CD8-positive, alpha-beta memory T cell (primary cell): ENCODE measurements at regions of chr12 and their contacts with region 1.

Region 1: DNA sequence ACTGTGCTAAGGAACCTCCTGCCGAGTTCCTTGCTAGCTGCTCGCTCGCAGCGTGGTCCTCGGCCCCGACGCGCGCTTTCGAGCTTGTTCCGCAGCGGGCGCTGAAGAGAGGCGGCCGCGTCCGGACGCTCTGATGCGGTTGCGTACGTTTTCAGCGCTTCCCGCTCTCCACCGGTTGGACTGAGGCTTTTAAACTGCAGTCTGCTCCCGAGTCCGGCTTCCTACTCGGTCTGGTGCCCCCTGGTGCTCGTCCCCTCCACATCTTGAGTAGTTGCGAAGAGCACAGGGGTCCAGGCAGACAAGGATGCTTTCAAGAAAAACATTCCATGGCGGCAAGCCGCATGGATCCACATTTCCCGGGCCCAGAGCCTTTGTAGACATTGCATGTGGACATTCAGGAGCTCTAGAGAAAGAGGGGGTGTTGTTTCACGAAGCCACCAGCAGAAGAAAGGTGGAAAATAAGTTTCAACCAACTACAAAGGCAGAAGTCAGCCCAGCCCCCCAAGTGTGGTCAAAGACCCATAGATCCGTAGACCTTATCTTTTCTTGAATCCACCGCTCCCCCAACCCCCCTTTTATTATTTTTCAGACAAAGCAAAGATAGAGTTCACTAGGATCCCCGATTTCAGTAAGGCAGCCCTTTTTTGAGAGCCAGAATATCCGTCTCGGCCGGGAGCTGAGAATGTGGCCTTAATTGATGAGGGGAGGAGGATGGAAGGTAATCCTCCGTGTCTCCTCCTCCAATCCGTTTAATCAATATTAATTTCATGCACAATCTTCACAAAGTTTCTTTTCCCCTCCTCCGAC is 984 bp upstream of the WNK1 start:
- DNase-seq: peak; percentile 70 to 86 (median 81)
- H3K4me3 ChIP-seq: peak overlapping the region; percentile 56
- H3K4me3 Mint-ChIP-seq: no peak overlapping the region
- H3K27ac ChIP-seq: peak overlapping the region; percentile 71
- H3K27ac Mint-ChIP-seq: no peak overlapping the region
- H3K4me1 ChIP-seq: peaks cover 24% of the 10 kb centered on the region
- H3K4me1 Mint-ChIP-seq: peaks cover 12 to 24% (median 21%) of the 10 kb centered on the region in 3 donors
- H3K27me3 ChIP-seq: no peaks in the 10 kb centered on the region
- H3K27me3 Mint-ChIP-seq: no peaks in the 10 kb centered on the region

Region 2: DNA sequence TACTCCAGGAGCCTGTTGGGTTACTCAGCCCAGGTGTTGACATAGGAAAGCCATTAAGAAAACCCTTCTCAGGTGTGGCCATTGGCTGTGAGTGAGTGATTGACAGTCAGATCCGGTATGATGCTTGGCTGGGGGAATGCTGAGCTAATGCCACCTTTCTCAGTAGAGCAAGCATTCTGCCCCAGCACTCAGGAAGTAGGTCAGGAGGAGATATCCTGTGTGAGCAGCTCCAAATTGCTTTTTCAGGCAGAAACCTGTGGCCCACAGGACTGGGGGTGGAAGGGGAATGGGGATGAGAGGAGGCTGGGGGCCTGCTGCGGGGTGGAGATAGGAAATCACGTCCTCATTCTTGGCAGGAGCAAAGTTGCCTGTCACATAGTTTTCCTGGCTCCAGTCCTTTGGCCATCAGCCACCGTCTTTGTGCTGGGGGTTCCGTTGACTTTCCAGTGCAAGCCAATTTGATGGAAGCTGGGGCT is 143.8 kb before region 1 on chr12:
- CTCF ChIA-PET with region 1: interaction called, 13 read pairs
- POLR2A ChIA-PET with region 1: interaction called, 3 read pairs
- DNase-seq: no peak
- H3K4me3 ChIP-seq: no peak overlapping the region
- H3K4me3 Mint-ChIP-seq: no peak overlapping the region
- H3K27ac ChIP-seq: no peak overlapping the region
- H3K27ac Mint-ChIP-seq: peak overlapping the region in 2 of 8 donors; percentile 27 to 59
- H3K4me1 ChIP-seq: peaks cover 16% of the 10 kb centered on the region
- H3K4me1 Mint-ChIP-seq: peaks cover 25 to 37% (median 25%) of the 10 kb centered on the region in 3 donors
- H3K27me3 ChIP-seq: no peaks in the 10 kb centered on the region
- H3K27me3 Mint-ChIP-seq: no peaks in the 10 kb centered on the region

Region 3: DNA sequence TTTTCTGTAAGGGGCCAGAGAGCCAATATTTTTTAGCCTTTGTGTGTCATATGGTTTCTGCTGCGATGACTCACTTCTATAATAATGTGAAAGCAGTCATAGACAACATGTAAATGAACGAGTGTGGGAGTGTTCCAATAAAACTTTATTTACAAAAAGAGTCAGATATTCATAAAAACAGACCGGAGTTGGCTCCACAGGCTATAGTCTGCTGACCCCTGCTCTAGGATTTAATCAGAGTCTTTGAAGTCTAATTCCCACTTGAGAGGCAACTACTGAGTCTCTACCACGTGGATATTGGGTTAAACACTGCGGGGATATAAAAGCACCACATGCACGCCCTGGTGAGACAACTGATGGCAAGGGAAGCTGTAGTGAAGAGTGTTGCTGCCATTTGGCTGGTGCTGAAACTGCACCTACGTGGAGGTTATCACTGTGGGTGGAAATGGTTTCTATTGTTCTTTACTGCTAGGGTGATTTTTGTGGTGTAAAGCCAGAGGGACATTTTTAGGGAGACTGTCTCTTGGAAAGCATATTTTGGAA is 84.6 kb before region 1 on chr12:
- CTCF ChIA-PET with region 1: interaction called, 27 read pairs
- POLR2A ChIA-PET with region 1: interaction called, 23 read pairs
- DNase-seq: peak in 2 of 5 donors; percentile 56 to 58
- H3K4me3 ChIP-seq: no peak overlapping the region
- H3K4me3 Mint-ChIP-seq: peak overlapping the region; percentile 4 to 76 (median 63)
- H3K27ac ChIP-seq: peak overlapping the region; percentile 62
- H3K27ac Mint-ChIP-seq: peak overlapping the region; percentile 69 to 94 (median 90)
- H3K4me1 ChIP-seq: peaks cover 46% of the 10 kb centered on the region
- H3K4me1 Mint-ChIP-seq: peaks cover 52 to 67% (median 66%) of the 10 kb centered on the region in 3 donors
- H3K27me3 ChIP-seq: no peaks in the 10 kb centered on the region
- H3K27me3 Mint-ChIP-seq: no peaks in the 10 kb centered on the region

Region 4: DNA sequence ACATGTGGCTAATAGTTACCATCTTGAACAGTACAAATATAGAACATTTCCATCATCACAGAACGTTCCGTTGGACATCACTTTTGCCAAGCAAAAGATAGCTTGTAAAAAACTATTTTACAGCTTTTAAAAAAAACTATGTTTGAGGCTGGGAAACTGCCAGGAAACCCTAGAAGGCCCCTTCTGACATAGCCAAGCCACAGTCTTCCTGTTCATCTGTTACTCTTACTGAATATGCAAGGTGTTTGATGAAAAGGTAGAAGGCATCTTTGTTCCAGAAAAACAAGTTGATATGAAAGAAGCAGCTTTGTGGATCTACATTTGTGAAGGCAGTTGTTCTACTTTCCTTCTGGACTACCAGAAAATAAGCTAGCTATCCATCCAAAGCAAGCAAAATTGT is 22.6 kb before region 1 on chr12:
- CTCF ChIA-PET with region 1: interaction called, 24 read pairs
- POLR2A ChIA-PET with region 1: interaction called, 9 read pairs
- DNase-seq: peak in 2 of 5 donors; percentile 47 to 75
- H3K4me3 ChIP-seq: no peak overlapping the region
- H3K4me3 Mint-ChIP-seq: peak overlapping the region in 4 of 7 donors; percentile 6 to 74 (median 46)
- H3K27ac ChIP-seq: no peak overlapping the region
- H3K27ac Mint-ChIP-seq: peak overlapping the region in 7 of 8 donors; percentile 60 to 94 (median 84)
- H3K4me1 ChIP-seq: peaks cover 61% of the 10 kb centered on the region
- H3K4me1 Mint-ChIP-seq: peaks cover 39 to 67% (median 65%) of the 10 kb centered on the region in 3 donors
- H3K27me3 ChIP-seq: no peaks in the 10 kb centered on the region
- H3K27me3 Mint-ChIP-seq: no peaks in the 10 kb centered on the region

Region 5: DNA sequence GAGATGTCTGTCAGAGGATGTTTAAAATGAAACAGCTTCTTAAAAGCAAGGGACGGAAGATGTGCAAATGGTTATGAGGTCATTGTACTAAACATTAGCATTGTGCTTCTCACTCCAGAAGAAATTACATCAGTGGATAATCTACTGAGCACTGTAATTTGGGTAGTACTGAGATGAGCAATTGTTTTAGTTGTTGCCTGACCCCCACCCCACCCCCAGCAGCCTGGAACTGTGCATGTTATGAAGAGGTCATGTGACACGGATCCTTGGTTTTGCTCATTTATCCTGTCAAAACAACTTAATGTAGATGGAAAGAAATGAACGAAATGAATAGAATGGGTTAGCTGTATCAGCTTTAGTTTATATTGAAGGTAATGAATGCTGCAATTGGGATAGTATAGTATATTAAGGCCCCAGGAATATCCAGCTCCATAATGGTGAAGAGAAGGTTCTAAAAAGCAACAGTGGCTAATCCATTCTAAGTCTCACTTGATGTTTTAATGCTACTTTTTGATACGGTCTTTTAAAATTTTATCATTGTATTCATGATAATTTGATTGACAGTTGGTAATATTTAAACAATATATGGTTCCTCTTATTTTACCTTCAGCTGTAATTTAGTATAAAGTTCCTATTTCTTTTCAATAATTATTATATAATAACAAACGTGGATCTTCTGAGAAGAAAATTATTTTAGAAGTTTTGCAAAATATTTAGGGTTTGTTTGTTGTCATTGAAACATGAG is 59.4 kb after region 1 on chr12:
- CTCF ChIA-PET with region 1: interaction called, 32 read pairs
- POLR2A ChIA-PET with region 1: interaction called, 4 read pairs
- DNase-seq: no peak
- H3K4me3 ChIP-seq: no peak overlapping the region
- H3K4me3 Mint-ChIP-seq: peak overlapping the region in 6 of 7 donors; percentile 25 to 67 (median 46)
- H3K27ac ChIP-seq: no peak overlapping the region
- H3K27ac Mint-ChIP-seq: peak overlapping the region; percentile 45 to 90 (median 74)
- H3K4me1 ChIP-seq: peaks cover 58% of the 10 kb centered on the region
- H3K4me1 Mint-ChIP-seq: peaks cover 66 to 83% (median 82%) of the 10 kb centered on the region in 3 donors
- H3K27me3 ChIP-seq: no peaks in the 10 kb centered on the region
- H3K27me3 Mint-ChIP-seq: no peaks in the 10 kb centered on the region